ENCODE measurements at regions of chr6 and their contacts with region 1.

Region 1: GRCh38 chr6:147285087-147285855 is 81.1 kb downstream of the STXBP5 start:
- DNase-seq: no peak
- ATAC-seq: peak in 1 of 4 donors; percentile 65
- H3K4me3 ChIP-seq: no peak overlapping the region
- H3K27ac ChIP-seq: peak overlapping the region in 1 of 12 donors; percentile 9
- H3K4me1 ChIP-seq: peaks cover 0 to 24% (median 0%) of the 10 kb centered on the region in 12 donors
- H3K27me3 ChIP-seq: no peaks in the 10 kb centered on the region
- CTCF ChIP-seq: peak; percentile 40 to 71 (median 56)
- POLR2A ChIP-seq: no peak

Region 2: DNA sequence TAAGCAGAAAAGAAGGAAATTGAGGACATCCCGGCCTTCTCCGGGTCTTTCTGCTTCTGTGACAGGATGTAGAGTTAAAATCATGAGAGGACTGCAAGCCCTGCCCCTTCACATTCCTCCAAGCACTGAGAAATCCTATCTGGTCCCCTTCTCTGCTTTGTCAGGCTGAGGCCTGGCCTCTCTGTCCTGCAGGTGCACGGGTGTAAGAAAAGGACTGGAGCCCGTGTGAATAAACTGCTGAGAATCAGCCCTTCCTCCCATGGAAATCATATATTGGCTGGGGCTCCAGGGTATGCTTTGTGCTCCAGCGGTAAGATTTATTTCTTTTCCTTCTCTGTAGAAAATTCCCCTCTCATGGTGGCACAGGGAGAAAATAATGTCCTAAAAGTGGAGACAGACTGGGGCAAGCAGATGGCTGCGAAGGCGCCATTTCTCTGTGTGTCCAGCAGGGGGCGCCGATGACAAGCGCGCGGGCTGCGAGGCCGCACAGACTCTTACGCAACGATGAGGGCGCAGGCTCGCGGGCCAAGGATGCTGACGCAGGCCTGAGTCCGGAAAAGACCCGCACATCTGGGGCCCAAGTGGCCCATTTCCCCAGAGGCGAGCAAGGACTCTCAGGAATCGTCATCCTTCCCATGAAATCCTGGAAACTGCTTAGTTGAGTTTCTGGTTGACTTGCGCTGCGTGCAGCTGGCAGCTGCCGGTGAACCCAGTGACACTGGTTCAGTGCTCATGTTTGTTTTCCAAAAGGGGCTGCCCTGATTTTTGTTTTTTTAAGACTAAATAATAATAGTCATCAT is 427.9 kb before region 1 on chr6:
- intact Hi-C with region 1: loop called (anchors 1 to 5 kb)
- DNase-seq: peak; percentile 81 to 93 (median 87)
- ATAC-seq: peak; percentile 95 to 99 (median 96)
- H3K4me3 ChIP-seq: peak overlapping the region in 10 of 12 donors; percentile 23 to 60 (median 46)
- H3K27ac ChIP-seq: peak overlapping the region in 11 of 12 donors; percentile 9 to 73 (median 55)
- H3K4me1 ChIP-seq: peaks cover 0 to 9% (median 0%) of the 10 kb centered on the region in 12 donors
- H3K27me3 ChIP-seq: no peaks in the 10 kb centered on the region
- CTCF ChIP-seq: peak; percentile 94 to 100 (median 98)
- POLR2A ChIP-seq: no peak

Region 3: GRCh38 chr6:146905181-146905704 is 380.0 kb before region 1 on chr6:
- intact Hi-C with region 1: loop called in 2 of 10 experiments (anchors 5 to 10 kb)
- DNase-seq: peak in 3 of 5 donors; percentile 11 to 34 (median 29)
- ATAC-seq: no peak
- H3K4me3 ChIP-seq: no peak overlapping the region
- H3K27ac ChIP-seq: no peak overlapping the region
- H3K4me1 ChIP-seq: peaks cover 0 to 13% (median 7%) of the 10 kb centered on the region in 12 donors
- H3K27me3 ChIP-seq: no peaks in the 10 kb centered on the region
- CTCF ChIP-seq: no peak
- POLR2A ChIP-seq: no peak

Region 4: GRCh38 chr6:147311218-147311617 is 25.9 kb after region 1 on chr6:
- intact Hi-C with region 1: no loop called
- DNase-seq: no peak
- ATAC-seq: no peak
- H3K4me3 ChIP-seq: no peak overlapping the region
- H3K27ac ChIP-seq: no peak overlapping the region
- H3K4me1 ChIP-seq: no peaks in the 10 kb centered on the region
- H3K27me3 ChIP-seq: no peaks in the 10 kb centered on the region
- CTCF ChIP-seq: no peak
- POLR2A ChIP-seq: no peak

Region 5: DNA sequence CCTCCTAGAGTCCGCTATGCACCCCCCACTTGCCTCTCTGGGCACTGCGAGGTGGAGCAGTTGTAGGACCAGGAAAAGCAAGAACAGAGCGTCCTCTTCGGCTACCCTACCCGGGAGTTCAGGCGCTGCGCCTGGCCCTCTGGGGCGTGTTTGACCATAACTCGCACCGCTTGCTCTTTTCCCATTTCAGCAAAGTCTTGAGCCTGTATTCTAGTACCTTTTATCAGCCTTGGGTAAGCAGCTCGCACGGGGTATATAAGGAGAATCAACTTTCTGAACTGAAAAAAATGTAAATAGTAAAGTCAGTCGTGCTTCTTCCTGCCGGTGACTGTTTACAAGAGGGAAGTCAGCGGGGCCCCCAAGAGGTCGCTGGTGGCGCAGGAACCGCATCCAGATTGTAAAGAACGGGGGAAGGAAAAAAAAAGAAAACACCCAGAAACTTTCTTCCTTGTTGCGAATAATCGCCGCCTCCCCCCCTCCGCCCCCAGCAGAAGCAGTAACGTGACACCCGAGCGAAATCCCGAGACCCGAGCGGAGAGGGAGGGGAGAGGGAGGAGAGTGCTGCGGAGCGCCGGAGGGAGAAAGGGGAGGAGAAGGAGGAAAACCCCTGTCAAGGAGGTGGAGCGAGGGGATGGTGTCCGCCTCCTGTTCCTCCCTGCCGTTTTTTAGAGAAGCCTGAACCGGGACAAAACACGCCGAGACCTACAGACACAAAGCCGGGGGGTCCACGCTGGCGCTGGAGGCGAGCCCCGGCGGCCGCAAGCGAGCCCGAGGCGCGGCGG is 1461.3 kb after region 1 on chr6 and contains the start of gene UST:
- intact Hi-C with region 1: no loop called
- DNase-seq: peak; percentile 80 to 87 (median 83)
- ATAC-seq: peak; percentile 89 to 92 (median 90)
- H3K4me3 ChIP-seq: peak within 1 kb of the TSS; percentile 51 to 91 (median 74)
- H3K27ac ChIP-seq: peak within 1 kb of the TSS; percentile 58 to 87 (median 82)
- H3K4me1 ChIP-seq: peaks cover 0 to 24% (median 8%) of the 10 kb centered on the region in 12 donors
- H3K27me3 ChIP-seq: peaks cover 0 to 17% (median 0%) of the 10 kb centered on the region in 9 donors
- CTCF ChIP-seq: peak in 9 of 12 donors; percentile 20 to 60 (median 43)
- POLR2A ChIP-seq: peak in 1 of 2 donors; percentile 44
- total RNA-seq, gene UST: 1.5 to 4.5 (median 2.7) TPM